Stomach (tissue), 19 donors: ENCODE measurements at regions of chr1 and their contacts with region 1.

Region 1: GRCh38 chr1:205275916-205276640 is 45.5 kb downstream of the NUAK2 start:
- DNase-seq: no peak
- H3K4me3 ChIP-seq: no peak overlapping the region
- H3K27ac ChIP-seq: no peak overlapping the region
- H3K4me1 ChIP-seq: peaks cover 5 to 37% (median 29%) of the 10 kb centered on the region in 4 donors
- H3K27me3 ChIP-seq: no peaks in the 10 kb centered on the region
- CTCF ChIP-seq: no peak
- EP300 ChIP-seq: no peak
- POLR2A ChIP-seq: no peak

Region 2: DNA sequence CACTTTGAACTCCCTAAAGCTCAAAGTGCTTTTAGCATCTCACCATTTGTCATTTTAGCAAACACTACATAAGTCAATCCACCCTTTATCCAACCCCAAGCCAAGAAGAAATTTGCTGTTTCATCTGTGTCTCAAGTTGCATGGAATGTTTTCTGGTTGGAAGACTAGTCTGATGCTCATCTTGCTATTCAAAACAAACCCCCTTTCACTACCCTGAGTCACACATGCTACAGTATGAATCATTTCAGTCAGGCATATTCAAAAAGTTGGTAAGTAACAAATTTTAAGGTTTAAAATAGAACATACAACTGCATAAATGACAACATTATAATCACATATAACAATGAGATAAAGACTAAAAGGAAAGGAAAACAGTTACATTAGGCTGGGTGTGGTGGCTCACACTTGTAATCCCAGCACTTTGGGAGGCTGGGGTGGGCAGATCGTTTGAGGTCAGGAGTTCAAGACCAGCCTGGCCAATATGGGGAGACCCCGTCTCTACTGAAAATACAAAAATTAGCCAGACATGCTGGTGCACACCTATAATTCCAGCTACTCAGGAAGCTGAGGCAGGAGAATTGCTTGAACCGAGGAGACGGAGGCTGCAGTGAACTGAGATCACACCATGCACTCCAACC is 103.2 kb before region 1 on chr1:
- intact Hi-C with region 1: no loop called
- DNase-seq: no peak
- H3K4me3 ChIP-seq: no peak overlapping the region
- H3K27ac ChIP-seq: peak overlapping the region in 2 of 5 donors; percentile 21 to 39
- H3K4me1 ChIP-seq: peaks cover 0 to 27% (median 4%) of the 10 kb centered on the region in 4 donors
- H3K27me3 ChIP-seq: no peaks in the 10 kb centered on the region
- CTCF ChIP-seq: no peak
- EP300 ChIP-seq: no peak
- POLR2A ChIP-seq: no peak

Region 3: GRCh38 chr1:205321164-205321958 is 45.3 kb after region 1 on chr1 and contains the start of gene NUAK2:
- intact Hi-C with region 1: loop called (anchors 2 kb)
- DNase-seq: peak; percentile 95 to 96
- H3K4me3 ChIP-seq: peak within 1 kb of the TSS; percentile 62 to 75 (median 72)
- H3K27ac ChIP-seq: peak within 1 kb of the TSS; percentile 82 to 93 (median 87)
- H3K4me1 ChIP-seq: peaks cover 48 to 60% (median 52%) of the 10 kb centered on the region in 4 donors
- H3K27me3 ChIP-seq: peaks cover 0 to 7% (median 0%) of the 10 kb centered on the region in 3 donors
- CTCF ChIP-seq: peak in 2 of 7 experiments; percentile 8 to 35
- EP300 ChIP-seq: no peak
- POLR2A ChIP-seq: peak in 1 of 4 donors; percentile 53
- total RNA-seq, gene NUAK2: 0.58 to 16.5 (median 3.1) TPM